Endothelial cell of umbilical vein (primary cell): ENCODE measurements at regions of chr7 and their contacts with region 1.

Region 1: DNA sequence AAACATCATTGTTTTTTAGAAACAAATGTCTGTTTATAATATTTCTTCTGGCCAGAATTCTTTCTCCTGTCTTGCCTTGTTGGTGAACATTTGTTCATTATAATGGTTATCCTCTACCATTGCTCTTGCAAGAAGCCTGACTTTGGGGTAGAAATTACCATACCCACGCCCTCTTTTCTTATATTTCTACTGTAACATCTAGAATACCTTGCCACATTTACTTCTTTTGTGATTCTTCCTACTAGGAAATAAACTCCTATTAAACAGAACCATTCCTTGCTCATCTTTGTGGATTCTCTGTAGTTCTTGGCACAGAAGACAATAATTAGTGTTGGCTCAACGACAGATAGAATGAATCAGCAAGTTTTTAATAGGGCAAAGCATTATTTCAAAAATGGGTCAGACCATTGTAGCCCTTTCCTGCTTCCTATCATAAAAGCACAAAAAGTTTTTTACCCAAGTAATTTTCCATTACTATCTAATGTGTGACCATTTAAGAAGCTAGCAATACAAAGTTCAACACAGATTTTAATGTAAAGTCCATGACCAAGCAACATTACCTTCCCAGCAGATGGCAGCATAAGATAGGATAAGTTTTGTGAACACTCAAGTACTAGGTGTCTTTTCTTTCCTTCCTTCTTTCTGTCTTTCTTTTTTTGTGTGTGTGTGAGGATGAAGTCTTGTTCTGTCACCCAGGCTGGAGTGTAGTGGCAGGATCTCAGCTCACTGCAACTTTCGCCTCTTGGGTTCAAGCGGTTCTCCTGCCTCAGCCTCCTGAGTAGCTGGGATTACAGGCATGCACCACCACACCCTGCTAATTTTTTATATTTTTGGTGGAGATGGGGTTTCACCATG is 270.4 kb downstream of the HGF start:
- DNase-seq: peak; percentile 91
- H3K4me3 ChIP-seq: no peak overlapping the region
- H3K27ac ChIP-seq: no peak overlapping the region
- H3K4me1 ChIP-seq: peaks cover 14% of the 10 kb centered on the region
- H3K27me3 ChIP-seq: no peaks in the 10 kb centered on the region
- CTCF ChIP-seq: peak; percentile 36
- POLR2A ChIP-seq: no peak

Region 2: DNA sequence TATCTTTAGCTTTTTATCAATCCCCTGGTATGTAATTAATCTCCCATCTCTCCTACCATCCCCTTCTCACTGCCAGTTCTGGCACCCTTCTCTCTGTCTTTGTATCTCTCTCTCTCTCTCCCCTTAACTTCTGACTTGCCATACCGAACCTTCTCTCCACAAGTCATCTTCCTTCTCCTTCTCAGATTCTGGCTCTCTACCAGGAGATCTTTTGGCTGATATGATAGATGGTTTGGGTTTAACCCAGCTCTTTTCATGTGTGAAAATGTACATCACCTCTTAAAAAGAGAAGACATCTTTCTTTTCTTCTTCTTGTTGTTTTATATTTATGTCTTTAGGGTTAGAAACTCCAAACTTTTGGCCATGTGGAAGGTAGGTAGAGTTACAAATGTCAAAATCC is 73.6 kb after region 1 on chr7:
- CTCF ChIA-PET with region 1: no interaction called
- POLR2A ChIA-PET with region 1: no interaction called
- dilution Hi-C with region 1: no loop called
- intact Hi-C with region 1: no loop called
- DNase-seq: no peak
- H3K4me3 ChIP-seq: no peak overlapping the region
- H3K27ac ChIP-seq: no peak overlapping the region
- H3K4me1 ChIP-seq: no peaks in the 10 kb centered on the region
- H3K27me3 ChIP-seq: no peaks in the 10 kb centered on the region
- CTCF ChIP-seq: no peak
- POLR2A ChIP-seq: no peak

Region 3: DNA sequence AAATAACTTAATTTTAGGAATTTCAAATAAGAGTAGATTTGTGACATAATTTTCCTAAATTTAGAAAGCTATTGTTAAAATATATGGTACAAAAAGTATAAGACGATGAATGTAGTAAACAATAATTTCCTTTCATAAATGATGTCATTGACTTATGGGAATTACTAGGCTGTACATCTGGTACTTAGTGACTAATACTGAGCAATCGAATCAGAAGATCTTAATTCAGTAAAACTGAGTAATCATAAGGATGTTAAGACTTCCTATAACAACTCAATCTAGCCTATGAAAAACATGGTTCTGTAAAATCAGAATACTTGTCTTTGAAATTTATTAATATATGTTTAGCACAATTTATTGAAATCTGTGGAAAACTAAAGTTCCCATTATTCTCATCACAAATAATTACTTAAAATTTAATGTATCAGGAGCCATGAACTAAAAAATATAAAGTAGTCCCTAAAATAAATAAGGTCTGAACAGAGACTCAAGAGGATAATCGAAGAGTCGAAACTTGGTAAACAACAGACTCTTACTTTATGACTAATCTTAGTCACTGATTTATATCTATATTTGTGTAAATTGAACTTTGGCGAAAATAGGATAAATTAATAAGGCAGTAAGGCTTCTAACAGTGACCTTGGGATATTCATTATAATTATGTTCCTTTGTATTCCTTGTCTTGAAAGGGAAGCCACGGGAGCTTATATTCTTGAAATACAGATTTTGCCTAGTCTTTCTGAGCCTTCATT is 128.2 kb after region 1 on chr7:
- CTCF ChIA-PET with region 1: interaction called, 13 read pairs
- POLR2A ChIA-PET with region 1: no interaction called
- dilution Hi-C with region 1: no loop called
- intact Hi-C with region 1: no loop called
- DNase-seq: peak; percentile 80
- H3K4me3 ChIP-seq: peak overlapping the region in 2 of 3 experiments; percentile 16 to 52
- H3K27ac ChIP-seq: peak overlapping the region; percentile 97
- H3K4me1 ChIP-seq: peaks cover 27% of the 10 kb centered on the region
- H3K27me3 ChIP-seq: no peaks in the 10 kb centered on the region
- CTCF ChIP-seq: no peak
- POLR2A ChIP-seq: no peak

Region 4: GRCh38 chr7:81776948-81777630 is 277.6 kb after region 1 on chr7:
- CTCF ChIA-PET with region 1: interaction called, 6 read pairs
- POLR2A ChIA-PET with region 1: no interaction called
- dilution Hi-C with region 1: loop called (anchors 25 kb)
- intact Hi-C with region 1: loop called (anchors 5 kb)
- DNase-seq: no peak
- H3K4me3 ChIP-seq: no peak overlapping the region
- H3K27ac ChIP-seq: no peak overlapping the region
- H3K4me1 ChIP-seq: no peaks in the 10 kb centered on the region
- H3K27me3 ChIP-seq: no peaks in the 10 kb centered on the region
- CTCF ChIP-seq: no peak
- POLR2A ChIP-seq: no peak

Region 5: DNA sequence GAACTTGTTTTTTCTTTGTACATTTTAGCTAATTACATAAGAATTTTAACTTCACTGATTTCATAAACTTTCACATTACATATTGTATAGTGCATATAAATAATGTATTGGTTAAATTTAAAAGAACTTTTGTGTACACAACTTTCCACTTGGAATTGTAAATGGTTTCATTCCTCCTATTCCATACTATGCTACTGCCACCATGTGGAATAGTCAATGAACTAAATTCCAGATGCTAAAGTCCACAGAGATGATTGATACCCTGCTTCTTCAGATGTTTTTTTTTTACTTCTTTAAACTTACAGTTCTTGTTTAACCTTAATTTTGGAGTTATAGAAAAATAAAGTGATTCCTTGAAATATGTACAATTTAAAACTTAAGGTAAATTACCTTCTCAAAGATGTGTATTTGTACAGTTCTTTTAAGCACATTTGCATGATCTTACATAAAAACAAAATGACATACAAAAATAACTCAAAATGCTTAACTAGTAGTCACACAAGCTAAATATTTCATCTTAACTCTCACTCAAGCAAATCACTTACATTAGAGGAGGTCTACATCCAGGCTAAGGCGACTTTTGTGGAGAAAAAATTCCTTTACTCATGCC is 518.0 kb after region 1 on chr7:
- CTCF ChIA-PET with region 1: interaction called, 185 read pairs
- POLR2A ChIA-PET with region 1: no interaction called
- dilution Hi-C with region 1: no loop called
- intact Hi-C with region 1: loop called (anchors 1 kb)
- DNase-seq: peak; percentile 53
- H3K4me3 ChIP-seq: no peak overlapping the region
- H3K27ac ChIP-seq: no peak overlapping the region
- H3K4me1 ChIP-seq: no peaks in the 10 kb centered on the region
- H3K27me3 ChIP-seq: no peaks in the 10 kb centered on the region
- CTCF ChIP-seq: peak; percentile 20 to 31
- POLR2A ChIP-seq: no peak

Region 6: GRCh38 chr7:82234457-82235049 is 735.1 kb after region 1 on chr7:
- CTCF ChIA-PET with region 1: interaction called, 4 read pairs
- POLR2A ChIA-PET with region 1: no interaction called
- dilution Hi-C with region 1: no loop called
- intact Hi-C with region 1: loop called (anchors 5 kb)
- DNase-seq: peak; percentile 61
- H3K4me3 ChIP-seq: no peak overlapping the region
- H3K27ac ChIP-seq: no peak overlapping the region
- H3K4me1 ChIP-seq: peaks cover 12% of the 10 kb centered on the region
- H3K27me3 ChIP-seq: no peaks in the 10 kb centered on the region
- CTCF ChIP-seq: peak; percentile 20 to 27
- POLR2A ChIP-seq: no peak

Region 7: DNA sequence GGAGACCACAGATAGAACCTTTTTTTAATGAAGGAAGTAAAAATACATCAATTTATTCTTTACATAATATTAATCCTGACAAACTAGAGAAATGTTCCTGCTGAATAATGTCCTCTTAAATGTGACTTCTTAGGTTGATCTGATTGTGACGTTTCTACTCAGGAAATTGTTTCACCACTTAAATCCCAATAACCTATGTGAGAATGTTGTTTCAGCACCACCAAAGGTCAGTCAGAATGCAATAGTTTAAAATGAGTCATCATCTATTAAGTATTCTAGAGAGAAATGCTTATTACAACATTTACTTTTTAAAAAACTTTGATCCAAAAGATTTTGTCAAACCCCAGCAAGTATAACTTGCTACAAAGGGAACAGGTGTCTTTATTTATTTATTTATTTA is 1099.5 kb after region 1 on chr7:
- CTCF ChIA-PET with region 1: interaction called, 30 read pairs
- POLR2A ChIA-PET with region 1: no interaction called
- dilution Hi-C with region 1: no loop called
- intact Hi-C with region 1: loop called (anchors 5 kb)
- DNase-seq: peak; percentile 86
- H3K4me3 ChIP-seq: no peak overlapping the region
- H3K27ac ChIP-seq: no peak overlapping the region
- H3K4me1 ChIP-seq: peaks cover 30% of the 10 kb centered on the region
- H3K27me3 ChIP-seq: no peaks in the 10 kb centered on the region
- CTCF ChIP-seq: no peak
- POLR2A ChIP-seq: no peak